ENCODE measurements at regions of chr15 and their contacts with region 1.

Region 1: DNA sequence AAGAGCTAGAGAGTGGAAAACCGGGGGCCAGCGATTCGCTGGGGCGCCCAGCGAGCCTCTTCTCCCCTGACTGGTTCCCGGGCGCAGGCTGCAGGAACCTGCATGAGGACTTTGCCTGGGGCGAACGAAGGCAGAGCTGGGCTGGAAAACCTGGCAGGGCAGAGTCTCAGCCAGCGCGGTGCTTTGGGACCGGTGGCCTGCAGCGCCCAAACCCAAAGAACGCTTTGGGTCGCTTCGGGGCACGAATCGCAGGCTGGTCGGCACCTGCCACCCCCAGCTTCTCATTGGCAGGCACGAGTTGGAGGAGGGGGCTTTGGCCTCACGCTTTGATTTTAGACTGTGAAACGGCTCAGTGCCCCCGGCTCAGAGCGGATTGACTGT is 3.0 kb downstream of the ONECUT1 start:
- DNase-seq: no peak
- H3K4me3 Mint-ChIP-seq: no peak overlapping the region
- H3K27ac Mint-ChIP-seq: peak overlapping the region; percentile 61
- H3K4me1 Mint-ChIP-seq: peaks cover 11% of the 10 kb centered on the region
- H3K27me3 Mint-ChIP-seq: peaks cover 72% of the 10 kb centered on the region

Region 2: DNA sequence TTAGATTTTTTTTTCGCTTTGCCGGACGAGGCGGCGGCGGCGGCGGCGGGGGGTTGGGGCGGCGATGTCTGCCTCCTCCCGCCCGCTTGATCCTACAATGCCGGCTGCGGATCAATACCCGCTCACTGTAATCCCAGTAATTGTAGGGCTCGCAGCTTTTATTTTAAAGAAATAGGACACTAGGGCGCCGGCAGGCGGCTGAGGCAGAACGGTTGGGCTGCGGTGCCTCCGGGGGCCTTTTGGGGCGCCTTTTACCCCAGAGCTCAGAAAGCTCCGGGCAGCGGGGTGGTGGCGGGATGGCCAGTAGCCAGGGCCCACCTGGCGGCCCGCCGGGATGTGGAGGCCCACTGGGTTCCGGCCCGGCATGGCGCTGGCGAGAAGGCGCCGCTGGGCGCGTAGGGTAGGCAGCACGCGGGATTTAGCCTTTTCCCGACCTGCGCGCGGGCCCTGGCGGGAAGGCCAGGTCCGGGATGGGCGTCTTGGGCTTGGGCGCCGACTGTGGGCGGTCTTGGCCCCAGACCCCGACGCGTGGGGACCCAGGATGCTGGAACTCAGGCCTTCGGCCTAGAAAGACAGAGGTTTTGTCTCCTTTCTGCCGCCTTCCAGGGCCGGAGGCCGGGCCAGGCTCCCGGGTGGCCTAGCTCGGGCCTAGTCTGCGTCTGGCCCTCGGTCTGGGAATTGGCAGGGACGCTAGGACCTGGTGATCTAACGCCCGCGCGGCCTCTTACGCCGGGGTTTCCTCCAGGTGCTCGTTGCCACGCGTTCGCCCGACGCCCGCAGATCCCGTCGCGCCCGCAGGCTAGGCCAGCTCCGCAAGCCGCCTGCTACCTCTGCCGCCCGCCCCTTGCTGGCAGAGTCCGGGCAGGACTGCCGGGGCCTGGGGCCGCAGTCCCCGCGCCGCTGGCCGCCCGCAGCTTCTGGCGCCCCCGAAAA is 18.5 kb after region 1 on chr15:
- intact Hi-C with region 1: loop called (anchors 2 kb)
- DNase-seq: no peak
- H3K4me3 Mint-ChIP-seq: peak overlapping the region; percentile 37
- H3K27ac Mint-ChIP-seq: no peak overlapping the region
- H3K4me1 Mint-ChIP-seq: peaks cover 13% of the 10 kb centered on the region
- H3K27me3 Mint-ChIP-seq: peaks cover 80% of the 10 kb centered on the region